ENCODE measurements at regions of chr10 and their contacts with region 1.

Region 1: GRCh38 chr10:121648059-121648458 is 49.8 kb upstream of the FGFR2 start:
- DNase-seq: no peak
- H3K4me3 ChIP-seq: no peak overlapping the region
- H3K27ac ChIP-seq: no peak overlapping the region
- H3K4me1 ChIP-seq: no peaks in the 10 kb centered on the region
- H3K27me3 ChIP-seq: peaks cover 46% of the 10 kb centered on the region
- CTCF ChIP-seq: no peak

Region 2: DNA sequence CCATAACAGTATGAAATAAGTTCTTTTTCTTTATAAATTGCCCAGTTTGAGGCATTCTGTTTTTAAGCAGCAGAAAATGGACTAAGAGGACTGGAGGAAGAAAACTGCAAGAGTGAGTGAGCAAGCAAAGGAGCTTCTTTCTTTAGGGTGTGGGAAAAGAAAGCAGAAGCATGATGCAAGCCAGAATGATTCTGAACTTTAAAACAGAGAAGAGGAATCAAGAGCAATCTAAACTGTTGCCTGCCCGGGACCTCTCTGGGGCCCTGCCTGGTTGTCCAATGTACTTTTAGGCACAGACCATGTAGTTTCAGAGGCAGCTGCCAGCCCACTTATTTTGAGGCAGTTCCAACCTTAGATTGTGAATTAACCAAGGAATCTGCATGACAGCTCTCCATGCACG is 1004.7 kb before region 1 on chr10:
- CTCF ChIA-PET with region 1: interaction called, 15 read pairs
- POLR2A ChIA-PET with region 1: no interaction called
- intact Hi-C with region 1: no loop called
- DNase-seq: no peak
- H3K4me3 ChIP-seq: no peak overlapping the region
- H3K27ac ChIP-seq: no peak overlapping the region
- H3K4me1 ChIP-seq: no peaks in the 10 kb centered on the region
- H3K27me3 ChIP-seq: 0 out of 2 replicates have a peak, but pooled peaks cover 5% of the 10 kb centered on the region
- CTCF ChIP-seq: no peak

Region 3: DNA sequence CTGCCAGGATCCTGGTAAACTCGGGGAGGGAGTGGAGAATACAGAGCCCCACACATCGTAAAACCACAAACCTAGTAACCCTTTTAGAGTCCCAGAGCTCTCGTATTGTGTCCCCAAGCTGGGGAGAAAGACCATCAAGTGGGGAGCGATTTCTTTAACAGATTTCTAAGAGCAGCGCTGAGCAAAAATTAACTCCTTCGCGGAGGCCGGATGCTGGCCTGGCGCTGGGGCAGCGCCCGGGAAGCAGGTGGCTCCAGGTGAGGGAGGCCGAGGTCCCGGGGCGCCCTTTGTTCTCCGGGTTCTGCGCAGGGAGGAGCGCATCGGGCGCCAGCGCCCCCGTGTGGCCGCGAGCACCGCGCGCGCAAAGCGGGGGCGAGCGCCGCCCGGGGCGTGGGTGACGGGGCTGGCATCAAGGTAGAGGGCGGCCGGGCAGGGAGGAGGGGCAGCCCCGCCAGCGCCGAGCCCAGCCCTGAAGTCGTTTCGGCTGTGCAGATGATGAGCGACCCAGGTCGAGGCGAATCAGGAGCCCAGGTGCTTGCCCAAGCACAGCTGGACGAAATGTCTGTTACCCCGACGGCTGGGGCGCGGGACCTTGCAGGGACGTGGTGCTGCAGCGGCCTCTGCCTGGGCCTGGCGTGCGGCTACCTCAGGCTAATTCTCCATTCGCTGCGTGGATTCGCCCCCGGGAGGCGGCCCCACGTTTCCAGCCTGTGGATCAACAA is 39.4 kb before region 1 on chr10:
- CTCF ChIA-PET with region 1: no interaction called
- POLR2A ChIA-PET with region 1: no interaction called
- intact Hi-C with region 1: no loop called
- DNase-seq: peak in 1 of 2 experiments; percentile 27
- H3K4me3 ChIP-seq: no peak overlapping the region
- H3K27ac ChIP-seq: no peak overlapping the region
- H3K4me1 ChIP-seq: no peaks in the 10 kb centered on the region
- H3K27me3 ChIP-seq: peaks cover 58% of the 10 kb centered on the region
- CTCF ChIP-seq: no peak; the same call in 1 of the 2 replicates

Region 4: GRCh38 chr10:121662945-121663917 is 15.2 kb after region 1 on chr10:
- CTCF ChIA-PET with region 1: no interaction called
- POLR2A ChIA-PET with region 1: no interaction called
- intact Hi-C with region 1: no loop called
- DNase-seq: no peak
- H3K4me3 ChIP-seq: no peak overlapping the region
- H3K27ac ChIP-seq: no peak overlapping the region
- H3K4me1 ChIP-seq: no peaks in the 10 kb centered on the region
- H3K27me3 ChIP-seq: peaks cover 42% of the 10 kb centered on the region; the same call in 1 of the 2 replicates
- CTCF ChIP-seq: 0 out of 2 replicates have a peak, but pooled peaks have one; percentile 23

Measured in PC-9 (cell line).